Endothelial cell of umbilical vein (primary cell): ENCODE measurements at regions of chr13 and their contacts with region 1.

Region 1: DNA sequence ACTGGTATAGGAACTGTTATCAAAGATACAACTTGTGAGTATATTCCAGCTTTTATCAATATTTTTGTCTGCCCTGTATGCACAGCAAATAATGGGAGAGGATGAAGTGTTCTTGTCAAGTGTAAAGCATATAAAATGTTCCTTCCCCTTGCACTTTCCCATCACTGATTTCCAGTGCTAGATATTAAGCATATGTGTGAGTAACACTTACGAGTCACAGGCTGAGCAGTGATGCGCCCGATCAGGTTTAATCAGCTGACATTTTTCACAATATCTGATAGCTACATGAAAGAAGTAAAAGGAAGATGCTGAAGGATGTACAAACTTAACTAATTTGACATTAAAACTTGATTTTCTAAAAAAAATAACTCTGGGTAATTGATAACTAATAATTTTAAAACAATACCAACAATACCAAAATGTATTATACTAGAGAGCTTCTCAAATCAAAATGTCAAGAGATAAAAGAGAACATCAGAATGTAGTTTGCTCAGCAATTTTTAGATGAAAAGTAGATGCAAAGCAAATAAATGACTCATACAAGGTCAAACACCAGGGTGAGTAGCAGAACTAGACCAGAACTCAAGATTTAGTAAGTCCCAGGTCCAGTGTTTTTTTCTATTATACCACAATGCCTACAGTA is 56.4 kb downstream of the ZDHHC20 start:
- DNase-seq: peak; percentile 16
- H3K4me3 ChIP-seq: no peak overlapping the region
- H3K27ac ChIP-seq: no peak overlapping the region
- H3K4me1 ChIP-seq: peaks cover 28% of the 10 kb centered on the region
- H3K27me3 ChIP-seq: no peaks in the 10 kb centered on the region
- CTCF ChIP-seq: no peak
- POLR2A ChIP-seq: no peak

Region 2: GRCh38 chr13:21232196-21232595 is 170.5 kb before region 1 on chr13:
- CTCF ChIA-PET with region 1: no interaction called
- POLR2A ChIA-PET with region 1: no interaction called
- dilution Hi-C with region 1: no loop called
- intact Hi-C with region 1: no loop called
- DNase-seq: no peak
- H3K4me3 ChIP-seq: no peak overlapping the region
- H3K27ac ChIP-seq: no peak overlapping the region
- H3K4me1 ChIP-seq: no peaks in the 10 kb centered on the region
- H3K27me3 ChIP-seq: peaks cover 12 to 16% of the 10 kb centered on the region in 2 experiments
- CTCF ChIP-seq: no peak
- POLR2A ChIP-seq: no peak

Region 3: GRCh38 chr13:21426238-21426637 is 23.5 kb after region 1 on chr13:
- CTCF ChIA-PET with region 1: interaction called, 3 read pairs
- POLR2A ChIA-PET with region 1: no interaction called
- dilution Hi-C with region 1: no loop called
- intact Hi-C with region 1: loop called (anchors 2 kb)
- DNase-seq: no peak
- H3K4me3 ChIP-seq: no peak overlapping the region
- H3K27ac ChIP-seq: no peak overlapping the region
- H3K4me1 ChIP-seq: no peaks in the 10 kb centered on the region
- H3K27me3 ChIP-seq: no peaks in the 10 kb centered on the region
- CTCF ChIP-seq: no peak
- POLR2A ChIP-seq: no peak

Region 4: DNA sequence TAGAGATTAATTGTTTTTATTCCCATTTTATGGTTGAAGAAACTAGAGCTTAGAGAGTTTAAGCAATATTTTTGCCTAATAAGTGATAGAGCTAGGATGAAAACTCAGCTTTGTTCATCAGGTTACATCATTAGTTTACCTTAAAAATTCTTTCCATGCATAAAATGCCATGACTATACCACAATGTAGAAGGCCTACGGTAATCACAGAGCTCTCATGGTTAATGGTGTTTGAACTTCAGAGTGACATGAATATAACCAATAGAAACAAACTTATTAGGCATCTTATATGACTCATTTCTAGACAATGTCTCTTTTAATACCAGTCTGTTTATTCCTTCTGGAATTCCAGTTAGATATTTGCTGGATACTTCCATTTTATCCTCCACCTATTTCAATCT is 346.7 kb after region 1 on chr13:
- CTCF ChIA-PET with region 1: no interaction called
- POLR2A ChIA-PET with region 1: no interaction called
- dilution Hi-C with region 1: no loop called
- intact Hi-C with region 1: no loop called
- DNase-seq: no peak
- H3K4me3 ChIP-seq: no peak overlapping the region
- H3K27ac ChIP-seq: no peak overlapping the region
- H3K4me1 ChIP-seq: no peaks in the 10 kb centered on the region
- H3K27me3 ChIP-seq: no peaks in the 10 kb centered on the region
- CTCF ChIP-seq: no peak
- POLR2A ChIP-seq: no peak

Region 5: GRCh38 chr13:22031702-22032286 is 629.1 kb after region 1 on chr13:
- CTCF ChIA-PET with region 1: no interaction called
- POLR2A ChIA-PET with region 1: no interaction called
- dilution Hi-C with region 1: no loop called
- intact Hi-C with region 1: no loop called
- DNase-seq: no peak
- H3K4me3 ChIP-seq: no peak overlapping the region
- H3K27ac ChIP-seq: no peak overlapping the region
- H3K4me1 ChIP-seq: no peaks in the 10 kb centered on the region
- H3K27me3 ChIP-seq: no peaks in the 10 kb centered on the region
- CTCF ChIP-seq: no peak
- POLR2A ChIP-seq: no peak